ENCODE measurements at regions of chr14 and their contacts with region 1.

Region 1: DNA sequence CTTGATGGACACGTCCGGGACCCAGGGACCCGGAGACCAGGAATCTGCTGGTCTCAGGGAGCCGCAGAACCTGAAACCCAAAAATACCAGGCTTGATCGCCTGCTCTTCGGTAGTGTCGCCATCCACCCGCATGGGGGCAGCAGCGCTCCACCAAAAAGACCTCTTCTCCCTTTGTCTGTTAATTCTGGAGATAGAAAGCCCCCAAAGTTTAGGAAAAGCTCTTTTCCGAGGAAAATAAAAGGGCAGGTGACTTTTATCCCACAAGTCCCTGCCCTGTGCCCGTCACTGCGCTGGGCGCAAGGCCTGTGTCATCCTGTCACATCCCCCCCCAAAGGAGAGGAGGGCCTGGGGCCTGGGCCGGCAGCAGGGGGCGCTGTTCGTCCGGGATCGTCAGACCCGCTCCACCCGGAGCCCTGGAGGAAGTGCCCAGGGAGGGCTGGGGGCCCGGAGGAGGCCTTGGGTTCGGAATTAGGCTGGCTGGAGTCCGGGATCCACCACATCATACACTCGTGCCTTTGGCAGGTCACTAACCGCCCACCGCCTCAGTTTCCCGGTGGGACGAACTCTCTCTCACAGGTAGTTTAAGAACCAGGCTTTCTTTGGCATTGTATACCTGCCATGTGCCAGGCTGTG is 31.9 kb downstream of the DAD1 start:
- DNase-seq: peak; percentile 79 to 98 (median 93)
- ATAC-seq: peak; percentile 17
- H3K4me3 ChIP-seq: peak overlapping the region; percentile 46 to 60
- H3K4me3 Mint-ChIP-seq: peak overlapping the region; percentile 81
- H3K27ac ChIP-seq: peak overlapping the region; percentile 86 to 97
- H3K27ac Mint-ChIP-seq: peak overlapping the region; percentile 98
- H3K4me1 ChIP-seq: peaks cover 86% of the 10 kb centered on the region
- H3K4me1 Mint-ChIP-seq: peaks cover 91% of the 10 kb centered on the region
- H3K27me3 ChIP-seq: no peaks in the 10 kb centered on the region
- H3K27me3 Mint-ChIP-seq: no peaks in the 10 kb centered on the region
- CTCF ChIP-seq: peak; percentile 100

Region 2: GRCh38 chr14:21868442-21869046 is 688.6 kb before region 1 on chr14:
- CTCF ChIA-PET with region 1: no interaction called
- POLR2A ChIA-PET with region 1: interaction called, 4 read pairs
- intact Hi-C with region 1: loop called in 1 of 2 experiments (anchors 1 kb)
- DNase-seq: peak; percentile 53 to 84 (median 74)
- ATAC-seq: peak; percentile 91
- H3K4me3 ChIP-seq: peak overlapping the region in 1 of 2 experiments; percentile 2
- H3K4me3 Mint-ChIP-seq: peak overlapping the region; percentile 65
- H3K27ac ChIP-seq: no peak overlapping the region
- H3K27ac Mint-ChIP-seq: peak overlapping the region; percentile 80
- H3K4me1 ChIP-seq: peaks cover 5% of the 10 kb centered on the region
- H3K4me1 Mint-ChIP-seq: peaks cover 29% of the 10 kb centered on the region
- H3K27me3 ChIP-seq: no peaks in the 10 kb centered on the region
- H3K27me3 Mint-ChIP-seq: no peaks in the 10 kb centered on the region
- CTCF ChIP-seq: peak; percentile 81

Region 3: DNA sequence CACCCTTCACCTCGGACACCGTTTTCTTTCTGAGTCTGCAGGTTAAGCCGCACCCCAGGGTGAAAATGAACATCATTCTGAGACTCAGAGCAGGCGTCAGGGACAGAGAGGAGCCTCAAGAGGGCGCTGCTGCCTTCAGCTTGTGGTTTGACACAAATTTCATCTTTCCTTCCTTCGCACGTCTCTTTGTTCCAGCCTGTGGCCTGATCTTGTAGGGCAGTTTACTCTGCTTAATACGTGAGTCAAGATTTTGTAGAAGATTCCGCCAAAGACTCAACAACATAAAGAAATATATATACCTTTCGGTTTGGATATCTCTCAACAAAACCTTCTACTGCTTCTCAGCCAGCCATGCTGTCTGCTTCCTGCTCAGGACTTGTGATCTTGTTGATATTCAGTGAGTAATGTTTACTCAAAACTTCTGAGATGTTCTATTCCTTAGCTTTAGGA is 554.2 kb before region 1 on chr14:
- CTCF ChIA-PET with region 1: interaction called, 8 read pairs
- POLR2A ChIA-PET with region 1: interaction called, 10 read pairs
- intact Hi-C with region 1: loop called in 1 of 2 experiments (anchors 5 kb)
- DNase-seq: peak; percentile 39 to 84 (median 70)
- ATAC-seq: peak; percentile 76
- H3K4me3 ChIP-seq: peak overlapping the region; percentile 17 to 28
- H3K4me3 Mint-ChIP-seq: peak overlapping the region; percentile 67
- H3K27ac ChIP-seq: peak overlapping the region; percentile 50 to 67
- H3K27ac Mint-ChIP-seq: peak overlapping the region; percentile 93
- H3K4me1 ChIP-seq: peaks cover 20% of the 10 kb centered on the region
- H3K4me1 Mint-ChIP-seq: peaks cover 28% of the 10 kb centered on the region
- H3K27me3 ChIP-seq: no peaks in the 10 kb centered on the region
- H3K27me3 Mint-ChIP-seq: no peaks in the 10 kb centered on the region
- CTCF ChIP-seq: peak; percentile 32

Region 4: DNA sequence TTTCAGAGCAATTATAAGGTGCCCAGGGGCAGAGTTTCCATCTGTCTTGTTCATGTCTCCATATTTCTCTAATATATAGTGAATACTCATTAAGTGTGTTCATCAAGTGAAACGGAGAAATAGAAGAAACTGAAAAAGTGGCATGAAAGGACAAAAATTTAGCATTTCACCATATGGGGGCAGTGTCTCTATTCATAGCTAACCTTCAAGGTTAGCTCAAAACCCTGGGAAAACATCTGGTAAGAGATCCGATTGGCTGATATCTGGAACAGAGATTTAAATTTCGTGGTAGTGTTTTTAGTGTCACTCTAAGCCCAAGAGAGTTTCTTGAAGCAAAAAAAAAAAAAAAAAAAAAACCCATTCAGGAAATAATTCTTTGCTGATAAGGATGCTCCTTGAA is 335.6 kb before region 1 on chr14:
- CTCF ChIA-PET with region 1: interaction called, 4 read pairs
- POLR2A ChIA-PET with region 1: no interaction called
- intact Hi-C with region 1: loop called in 1 of 2 experiments (anchors 2 kb)
- DNase-seq: peak in 2 of 9 experiments; percentile 21 to 51
- ATAC-seq: no peak
- H3K4me3 ChIP-seq: peak overlapping the region in 1 of 2 experiments; percentile 8
- H3K4me3 Mint-ChIP-seq: peak overlapping the region; percentile 50
- H3K27ac ChIP-seq: no peak overlapping the region
- H3K27ac Mint-ChIP-seq: no peak overlapping the region
- H3K4me1 ChIP-seq: peaks cover 4% of the 10 kb centered on the region
- H3K4me1 Mint-ChIP-seq: peaks cover 12% of the 10 kb centered on the region
- H3K27me3 ChIP-seq: no peaks in the 10 kb centered on the region
- H3K27me3 Mint-ChIP-seq: no peaks in the 10 kb centered on the region
- CTCF ChIP-seq: no peak

Region 5: DNA sequence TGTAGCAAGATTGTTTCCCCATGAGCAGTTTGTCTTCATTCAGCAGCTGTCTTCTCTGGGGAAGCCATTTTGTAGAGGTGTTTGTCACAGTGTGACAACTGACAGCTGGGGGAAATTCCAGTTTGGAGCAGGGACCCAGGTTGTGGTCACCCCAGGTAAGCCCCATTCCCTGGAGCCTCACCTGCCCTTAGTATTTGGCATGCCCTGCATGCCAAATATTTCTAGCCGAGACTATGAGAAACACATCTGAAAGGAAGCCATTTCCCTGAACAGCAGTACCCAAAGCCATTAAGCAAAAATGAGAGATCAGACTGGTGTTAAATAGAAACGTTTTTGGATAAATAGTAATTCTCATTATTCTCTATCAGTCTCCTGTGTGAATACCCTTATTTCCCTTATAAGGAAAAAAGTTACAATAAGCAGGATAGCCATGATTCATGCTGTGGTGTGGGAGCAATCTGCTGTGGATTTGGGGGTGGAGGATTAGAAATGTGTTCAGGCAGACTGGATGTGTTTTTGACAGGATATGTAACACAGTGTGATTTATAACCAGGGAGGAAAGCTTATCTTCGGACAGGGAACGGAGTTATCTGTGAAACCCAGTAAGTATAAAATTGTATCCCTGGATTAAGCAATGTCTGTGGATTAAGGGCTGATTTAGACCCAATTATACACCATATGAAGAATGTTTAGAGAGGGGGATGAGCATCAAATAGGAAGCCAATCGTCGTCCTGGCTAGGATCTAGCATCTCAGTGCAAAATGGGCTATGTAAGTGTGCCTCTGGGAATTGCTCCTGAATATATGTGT is 37.0 kb before region 1 on chr14:
- CTCF ChIA-PET with region 1: interaction called, 225 read pairs
- POLR2A ChIA-PET with region 1: interaction called, 472 read pairs
- intact Hi-C with region 1: loop called (anchors 1 to 5 kb)
- DNase-seq: peak in 2 of 9 experiments; percentile 37 to 57
- ATAC-seq: peak; percentile 21
- H3K4me3 ChIP-seq: peak overlapping the region; percentile 47 to 61
- H3K4me3 Mint-ChIP-seq: peak overlapping the region; percentile 86
- H3K27ac ChIP-seq: peak overlapping the region; percentile 58 to 86
- H3K27ac Mint-ChIP-seq: peak overlapping the region; percentile 99
- H3K4me1 ChIP-seq: peaks cover 94% of the 10 kb centered on the region
- H3K4me1 Mint-ChIP-seq: peaks cover 93% of the 10 kb centered on the region
- H3K27me3 ChIP-seq: no peaks in the 10 kb centered on the region
- H3K27me3 Mint-ChIP-seq: no peaks in the 10 kb centered on the region
- CTCF ChIP-seq: no peak

Region 6: GRCh38 chr14:22630486-22630885 is 73.4 kb after region 1 on chr14:
- CTCF ChIA-PET with region 1: no interaction called
- POLR2A ChIA-PET with region 1: no interaction called
- intact Hi-C with region 1: no loop called
- DNase-seq: no peak
- ATAC-seq: no peak
- H3K4me3 ChIP-seq: no peak overlapping the region
- H3K4me3 Mint-ChIP-seq: no peak overlapping the region
- H3K27ac ChIP-seq: no peak overlapping the region
- H3K27ac Mint-ChIP-seq: no peak overlapping the region
- H3K4me1 ChIP-seq: no peaks in the 10 kb centered on the region
- H3K4me1 Mint-ChIP-seq: no peaks in the 10 kb centered on the region
- H3K27me3 ChIP-seq: peaks cover 0 to 3% of the 10 kb centered on the region in 2 experiments
- H3K27me3 Mint-ChIP-seq: peaks cover 10% of the 10 kb centered on the region
- CTCF ChIP-seq: no peak

Region 7: DNA sequence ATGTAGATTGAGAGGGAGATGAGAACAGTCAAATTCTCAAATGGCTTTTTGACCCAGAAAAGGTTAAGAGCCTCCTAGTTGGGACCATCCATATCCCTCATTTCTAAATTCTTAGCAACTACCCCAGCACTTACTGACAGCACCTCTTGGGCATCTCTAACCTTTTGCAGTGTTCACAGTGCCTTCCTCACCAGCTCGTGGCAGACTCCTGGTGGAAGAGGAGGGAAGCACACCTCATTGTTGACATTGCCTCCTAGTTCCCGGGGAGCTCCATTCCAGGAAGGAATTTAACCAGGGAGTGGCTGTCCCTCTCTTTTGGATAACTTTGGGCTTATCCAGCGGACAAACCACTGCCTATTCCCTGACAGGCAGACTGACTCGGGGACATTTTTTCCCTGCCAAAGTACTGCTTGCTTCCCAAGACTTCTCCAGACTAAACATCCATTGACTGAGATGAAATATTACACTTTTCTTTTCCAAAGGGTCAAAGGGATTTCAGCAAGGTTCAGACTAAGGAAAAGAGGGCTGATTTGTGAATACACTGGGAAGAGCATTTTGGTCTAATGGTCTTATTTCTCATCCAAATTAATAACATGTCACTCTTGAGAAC is 96.0 kb after region 1 on chr14:
- CTCF ChIA-PET with region 1: interaction called, 10 read pairs
- POLR2A ChIA-PET with region 1: interaction called, 5 read pairs
- intact Hi-C with region 1: loop called in 1 of 2 experiments (anchors 1 kb)
- DNase-seq: peak; percentile 8 to 70 (median 50)
- ATAC-seq: peak; percentile 94
- H3K4me3 ChIP-seq: no peak overlapping the region
- H3K4me3 Mint-ChIP-seq: no peak overlapping the region
- H3K27ac ChIP-seq: no peak overlapping the region
- H3K27ac Mint-ChIP-seq: no peak overlapping the region
- H3K4me1 ChIP-seq: no peaks in the 10 kb centered on the region
- H3K4me1 Mint-ChIP-seq: no peaks in the 10 kb centered on the region
- H3K27me3 ChIP-seq: no peaks in the 10 kb centered on the region
- H3K27me3 Mint-ChIP-seq: no peaks in the 10 kb centered on the region
- CTCF ChIP-seq: peak; percentile 72

Region 8: GRCh38 chr14:22962061-22962676 is 405.1 kb after region 1 on chr14:
- CTCF ChIA-PET with region 1: no interaction called
- POLR2A ChIA-PET with region 1: no interaction called
- intact Hi-C with region 1: no loop called
- DNase-seq: no peak
- ATAC-seq: no peak
- H3K4me3 ChIP-seq: no peak overlapping the region
- H3K4me3 Mint-ChIP-seq: no peak overlapping the region
- H3K27ac ChIP-seq: no peak overlapping the region
- H3K27ac Mint-ChIP-seq: no peak overlapping the region
- H3K4me1 ChIP-seq: peaks cover 5% of the 10 kb centered on the region
- H3K4me1 Mint-ChIP-seq: no peaks in the 10 kb centered on the region
- H3K27me3 ChIP-seq: no peaks in the 10 kb centered on the region
- H3K27me3 Mint-ChIP-seq: no peaks in the 10 kb centered on the region
- CTCF ChIP-seq: no peak

Region 9: GRCh38 chr14:23057757-23058653 is 500.9 kb after region 1 on chr14:
- CTCF ChIA-PET with region 1: interaction called, 3 read pairs
- POLR2A ChIA-PET with region 1: no interaction called
- intact Hi-C with region 1: loop called in 1 of 2 experiments (anchors 1 kb)
- DNase-seq: peak; percentile 70 to 92 (median 88)
- ATAC-seq: peak; percentile 70
- H3K4me3 ChIP-seq: peak overlapping the region; percentile 56 to 84
- H3K4me3 Mint-ChIP-seq: peak overlapping the region; percentile 87
- H3K27ac ChIP-seq: no peak overlapping the region
- H3K27ac Mint-ChIP-seq: peak overlapping the region; percentile 18
- H3K4me1 ChIP-seq: peaks cover 10% of the 10 kb centered on the region
- H3K4me1 Mint-ChIP-seq: peaks cover 17% of the 10 kb centered on the region
- H3K27me3 ChIP-seq: no peaks in the 10 kb centered on the region
- H3K27me3 Mint-ChIP-seq: no peaks in the 10 kb centered on the region
- CTCF ChIP-seq: peak; percentile 95